GM10248 (cell line): ENCODE measurements at regions of chr20 and their contacts with region 1.

Region 1: DNA sequence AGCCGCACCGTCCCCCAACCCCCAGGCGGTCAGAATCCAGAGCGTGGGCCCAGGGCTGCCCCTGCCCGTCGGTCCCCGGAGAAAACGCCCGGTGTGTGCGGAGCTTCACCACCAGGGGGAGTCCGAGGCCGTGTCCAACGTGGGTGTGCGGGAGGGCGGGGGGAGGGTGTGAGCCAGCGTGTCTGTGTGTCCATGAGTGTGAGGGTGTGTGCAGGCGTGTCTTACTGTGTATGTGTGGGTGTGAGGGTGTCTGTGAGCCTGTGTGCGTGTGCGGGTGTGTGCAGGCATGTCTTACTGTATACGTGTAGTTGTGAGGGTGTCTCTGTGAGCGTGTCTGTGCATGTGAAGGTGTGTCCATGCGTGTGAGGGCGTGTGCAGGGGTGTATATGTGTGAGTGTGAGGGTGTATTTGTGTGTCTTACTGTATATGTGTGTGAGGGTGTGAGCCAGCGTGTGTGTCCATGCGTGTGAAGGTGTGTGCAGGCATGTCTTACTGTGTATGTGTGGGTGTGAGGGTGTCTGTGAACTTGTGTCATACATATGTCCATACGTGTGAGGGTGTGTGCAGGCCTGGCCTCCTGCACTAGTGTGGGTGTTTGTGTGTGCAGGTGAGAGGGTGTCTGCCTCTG is 24.6 kb upstream of the GATA5 start:
- DNase-seq: peak; percentile 85
- CTCF ChIP-seq: peak; percentile 88

Region 2: GRCh38 chr20:62603021-62603906 is 102.9 kb after region 1 on chr20:
- CTCF ChIA-PET with region 1: interaction called, 10 read pairs
- POLR2A ChIA-PET with region 1: no interaction called
- DNase-seq: peak; percentile 75
- CTCF ChIP-seq: no peak

Region 3: DNA sequence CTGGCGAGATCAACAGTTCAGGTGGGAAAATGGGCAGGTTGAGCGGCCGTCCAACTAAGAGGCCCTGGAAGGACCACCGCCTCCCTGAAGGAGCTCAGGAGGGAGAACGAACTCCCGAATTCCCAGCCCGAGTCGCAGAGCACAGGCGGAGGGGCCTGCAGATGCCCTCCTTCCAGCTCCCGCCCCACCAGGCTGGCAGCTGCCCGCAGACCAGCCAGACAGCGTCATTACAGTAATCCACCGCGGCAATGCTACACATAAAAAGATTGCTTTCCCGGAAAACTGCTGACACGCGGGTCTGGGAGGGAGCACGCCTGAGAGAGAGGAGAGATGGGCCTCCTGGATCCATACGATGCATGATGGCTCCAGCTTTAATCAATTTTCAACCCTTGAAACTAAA is 111.5 kb after region 1 on chr20:
- CTCF ChIA-PET with region 1: interaction called, 26 read pairs
- POLR2A ChIA-PET with region 1: no interaction called
- DNase-seq: no peak
- CTCF ChIP-seq: no peak

Region 4: DNA sequence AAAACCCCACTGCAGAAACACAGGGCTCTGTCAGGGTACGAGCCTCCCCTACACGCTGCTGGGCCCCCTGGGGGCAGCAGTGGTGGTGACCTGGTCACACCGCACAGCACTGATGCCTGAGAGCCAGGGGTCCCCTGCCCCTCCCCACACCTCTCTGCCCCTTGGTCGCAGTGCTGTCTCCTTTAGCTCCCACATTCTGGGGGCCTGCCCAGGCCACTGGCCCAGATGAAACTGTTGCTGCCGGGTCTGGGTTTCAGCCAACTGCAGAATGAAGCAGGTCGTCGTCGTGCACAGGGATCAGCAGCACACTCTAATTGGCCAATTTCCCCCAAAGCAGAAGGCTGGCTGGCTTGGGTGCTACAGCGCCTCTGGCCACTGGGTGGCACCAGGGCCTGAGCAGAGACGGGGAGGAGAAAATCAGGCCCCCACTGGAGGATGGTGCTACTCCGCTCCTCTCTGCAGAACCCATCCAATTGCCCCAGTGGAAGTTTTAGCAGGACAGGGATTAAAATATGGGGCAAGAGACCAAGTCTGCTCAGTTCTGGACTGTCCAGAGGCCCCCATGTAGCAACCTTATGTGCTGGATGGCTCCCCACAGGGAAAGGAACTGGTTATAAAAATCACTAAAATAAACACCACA is 399.8 kb after region 1 on chr20:
- CTCF ChIA-PET with region 1: no interaction called
- POLR2A ChIA-PET with region 1: no interaction called
- DNase-seq: peak; percentile 89
- CTCF ChIP-seq: peak; percentile 95